ENCODE measurements at regions of chr19 and their contacts with region 1.

Region 1: GRCh38 chr19:51735759-51736449 is 12.1 kb upstream of the HAS1 start:
- DNase-seq: peak in 1 of 2 donors; percentile 21
- H3K4me3 ChIP-seq: no peak overlapping the region
- H3K27ac ChIP-seq: no peak overlapping the region
- H3K4me1 ChIP-seq: no peaks in the 10 kb centered on the region
- H3K27me3 ChIP-seq: peaks cover 0 to 31% of the 10 kb centered on the region in 2 donors
- CTCF ChIP-seq: no peak
- POLR2A ChIP-seq: no peak

Region 2: DNA sequence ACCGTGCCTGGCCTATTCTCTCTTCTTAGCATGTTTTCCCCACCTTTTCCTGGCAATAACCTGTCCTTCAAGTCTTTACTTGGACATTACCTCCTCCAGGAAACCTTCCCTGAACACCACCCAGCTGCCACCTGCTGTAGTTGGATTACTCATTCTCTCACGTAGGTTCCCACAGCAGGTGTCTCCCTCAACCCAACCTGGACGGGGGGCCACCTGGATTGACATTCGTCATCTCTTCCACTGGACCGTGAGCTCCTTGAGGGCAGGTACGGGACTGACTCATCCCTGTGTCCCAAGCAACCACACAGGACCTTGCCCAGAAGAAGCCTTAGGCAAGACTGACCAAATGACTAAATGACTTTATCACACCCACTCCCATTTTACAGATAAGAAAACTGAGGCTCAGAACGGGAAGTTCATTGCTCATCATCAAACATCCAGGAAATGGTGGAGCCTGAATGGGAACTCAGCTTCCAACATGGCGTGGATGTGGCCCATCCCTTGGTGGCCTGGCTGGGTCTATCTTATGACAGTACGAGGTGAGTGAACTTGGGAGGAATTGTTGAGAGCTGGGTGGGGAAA is 763.0 kb before region 1 on chr19:
- intact Hi-C with region 1: loop called (anchors 5 kb)
- DNase-seq: no peak
- H3K4me3 ChIP-seq: no peak overlapping the region
- H3K27ac ChIP-seq: no peak overlapping the region
- H3K4me1 ChIP-seq: peaks cover 0 to 3% of the 10 kb centered on the region in 2 donors
- H3K27me3 ChIP-seq: no peaks in the 10 kb centered on the region
- CTCF ChIP-seq: no peak
- POLR2A ChIP-seq: no peak